Common myeloid progenitor, CD34-positive (primary cell): ENCODE measurements at regions of chr2 and their contacts with region 1.

Region 1: GRCh38 chr2:27071277-27071989 is at the start of gene OST4:
- DNase-seq: peak; percentile 90 to 94 (median 94)
- H3K4me3 ChIP-seq: peak within 1 kb of the TSS; percentile 71 to 98 (median 96)
- H3K27ac ChIP-seq: peak within 1 kb of the TSS; percentile 84 to 92
- H3K4me1 ChIP-seq: peaks cover 13 to 63% (median 55%) of the 10 kb centered on the region in 4 experiments
- H3K27me3 ChIP-seq: no peaks in the 10 kb centered on the region

Region 2: GRCh38 chr2:27086090-27086723 is 14.8 kb after region 1 on chr2:
- CTCF ChIA-PET with region 1: interaction called, 50 read pairs
- POLR2A ChIA-PET with region 1: interaction called, 12 read pairs
- DNase-seq: peak; percentile 93 to 96 (median 95)
- H3K4me3 ChIP-seq: peak overlapping the region; percentile 43 to 77 (median 65)
- H3K27ac ChIP-seq: peak overlapping the region in 1 of 2 experiments; percentile 66
- H3K4me1 ChIP-seq: peaks cover 5 to 55% (median 44%) of the 10 kb centered on the region in 4 experiments
- H3K27me3 ChIP-seq: no peaks in the 10 kb centered on the region